Right ventricle myocardium inferior (tissue), 1 donor: ENCODE measurements at regions of chr15 and their contacts with region 1.

Region 1: DNA sequence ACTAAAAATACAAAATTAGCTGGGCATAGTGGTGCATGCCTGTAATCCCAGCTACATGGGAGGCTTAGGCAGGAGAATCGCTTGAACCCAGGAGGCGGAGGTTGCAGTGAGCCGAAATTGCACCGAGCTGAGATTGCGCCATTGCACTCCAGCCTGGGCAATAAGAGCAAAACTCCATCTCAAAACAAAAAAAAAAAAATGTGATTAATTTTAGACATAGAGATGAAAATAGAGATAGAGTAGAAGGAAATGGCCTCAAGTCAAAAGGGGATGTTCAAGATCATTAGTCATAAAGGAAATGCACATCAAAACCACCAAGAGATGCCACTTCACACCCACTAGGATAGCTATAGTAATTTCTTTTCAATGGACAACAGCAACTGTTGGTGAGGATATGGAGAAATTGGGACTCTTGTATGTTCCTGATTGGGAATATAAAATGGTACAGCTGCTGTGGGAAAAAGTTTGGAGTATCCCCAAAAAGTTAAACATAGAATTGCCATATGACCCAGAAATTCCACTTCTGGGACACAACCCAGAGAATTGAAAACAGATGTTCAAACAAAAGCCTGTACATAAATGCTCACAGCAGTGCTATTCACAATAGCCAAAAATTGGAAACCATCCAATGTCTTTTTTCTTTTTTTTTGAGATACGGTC is 55.4 kb downstream of the ABHD2 start:
- DNase-seq: peak; percentile 69
- ATAC-seq: no peak

Region 2: GRCh38 chr15:88995449-88995848 is 148.2 kb before region 1 on chr15:
- intact Hi-C with region 1: no loop called
- DNase-seq: no peak
- ATAC-seq: no peak

Region 3: DNA sequence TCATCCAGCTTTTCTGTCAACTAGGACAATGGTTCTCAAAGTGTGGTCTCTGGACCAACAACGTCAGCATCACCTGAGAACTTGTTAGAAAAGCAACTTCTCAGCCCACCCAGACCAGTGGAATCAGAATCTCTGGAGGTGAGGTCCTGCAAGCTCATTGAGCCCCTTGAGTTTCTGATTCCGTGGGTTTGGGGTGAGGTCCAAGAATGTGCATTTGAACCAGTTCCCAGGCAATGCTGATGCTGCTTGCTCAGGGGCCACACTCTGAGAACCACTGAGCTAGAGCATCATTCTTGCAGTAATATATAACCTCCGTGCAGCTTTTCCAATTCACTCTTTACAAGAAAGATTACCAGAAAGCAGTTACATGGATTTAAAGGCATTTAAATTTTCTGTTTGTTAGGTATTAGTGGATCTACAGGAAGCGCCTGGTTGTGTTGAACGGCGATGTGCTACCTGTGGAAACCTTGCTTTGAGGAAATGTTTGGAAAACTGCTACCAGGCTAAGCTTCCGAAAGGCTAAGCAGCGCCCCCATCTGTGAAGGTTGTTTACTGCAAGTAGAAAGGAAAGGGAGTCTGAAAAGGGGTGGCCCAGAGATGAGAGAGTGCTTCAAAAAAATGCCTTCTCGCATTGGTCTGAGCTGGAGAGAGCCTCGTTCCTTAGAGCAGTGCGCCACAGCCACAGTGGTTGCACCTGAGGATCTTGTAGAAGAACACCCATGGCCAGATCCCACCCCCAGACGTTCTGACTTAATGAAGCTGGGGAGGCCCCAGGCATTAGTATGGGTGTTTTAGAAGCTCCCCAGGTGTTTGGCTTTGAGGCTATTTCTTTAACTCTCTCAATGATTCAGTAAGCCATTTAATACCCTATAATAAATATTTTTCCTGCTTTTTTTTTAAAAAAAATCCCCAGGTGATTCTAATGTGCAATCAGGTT is 27.8 kb after region 1 on chr15:
- intact Hi-C with region 1: loop called (anchors 5 kb)
- DNase-seq: no peak
- ATAC-seq: no peak